WTC11 (cell line): ENCODE measurements at regions of chr11 and their contacts with region 1.

Region 1: DNA sequence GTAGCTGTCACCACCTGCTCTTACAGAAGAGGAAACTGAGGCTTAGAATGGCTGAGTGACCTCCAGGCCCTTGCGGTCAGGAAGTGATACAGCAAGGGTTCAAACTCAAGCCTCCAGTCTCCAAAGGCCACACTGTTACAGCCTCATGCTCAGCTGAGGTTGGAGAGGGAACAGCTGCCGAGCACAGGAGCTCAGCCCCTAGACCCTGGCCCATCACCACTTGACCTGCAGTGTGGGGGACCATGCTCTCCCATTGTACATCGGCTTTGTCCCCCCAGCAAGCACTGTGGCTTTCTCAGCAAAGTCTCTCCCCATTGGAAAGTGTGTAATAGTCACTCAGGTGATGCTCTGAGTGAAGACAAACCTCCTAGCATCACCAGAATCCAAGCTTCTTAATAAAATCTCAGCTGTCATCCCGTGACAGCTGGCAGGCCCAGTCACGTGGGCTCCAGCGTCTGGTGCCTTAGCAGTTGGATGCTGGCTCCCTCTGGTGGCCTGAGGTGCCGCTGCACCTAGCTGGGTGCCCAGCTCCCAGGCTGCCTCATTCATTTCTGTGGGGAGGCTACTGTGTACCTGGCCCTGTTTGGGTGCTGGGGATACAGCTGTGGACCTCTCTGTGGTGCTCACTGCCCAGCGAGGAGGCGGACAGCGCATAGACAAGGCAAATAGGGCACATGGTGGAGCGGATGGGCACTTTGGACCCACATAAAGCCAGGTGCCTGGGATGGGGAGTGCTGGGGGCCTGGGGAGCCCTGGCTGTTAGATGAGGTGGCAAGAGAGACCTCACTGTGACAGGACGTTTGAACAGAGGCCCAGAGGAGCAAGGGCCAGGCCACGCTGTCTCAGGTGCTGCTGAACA is 19.1 kb upstream of the MYRF start:
- DNase-seq: peak; percentile 85
- ATAC-seq: peak; percentile 66
- H3K4me3 Mint-ChIP-seq: no peak overlapping the region
- H3K27ac Mint-ChIP-seq: peak overlapping the region; percentile 39; the same call in 1 of the 2 replicates
- H3K4me1 Mint-ChIP-seq: peaks cover 2% of the 10 kb centered on the region; the same call in 1 of the 2 replicates
- H3K27me3 Mint-ChIP-seq: no peaks in the 10 kb centered on the region
- CTCF ChIP-seq: peak; percentile 89

Region 2: DNA sequence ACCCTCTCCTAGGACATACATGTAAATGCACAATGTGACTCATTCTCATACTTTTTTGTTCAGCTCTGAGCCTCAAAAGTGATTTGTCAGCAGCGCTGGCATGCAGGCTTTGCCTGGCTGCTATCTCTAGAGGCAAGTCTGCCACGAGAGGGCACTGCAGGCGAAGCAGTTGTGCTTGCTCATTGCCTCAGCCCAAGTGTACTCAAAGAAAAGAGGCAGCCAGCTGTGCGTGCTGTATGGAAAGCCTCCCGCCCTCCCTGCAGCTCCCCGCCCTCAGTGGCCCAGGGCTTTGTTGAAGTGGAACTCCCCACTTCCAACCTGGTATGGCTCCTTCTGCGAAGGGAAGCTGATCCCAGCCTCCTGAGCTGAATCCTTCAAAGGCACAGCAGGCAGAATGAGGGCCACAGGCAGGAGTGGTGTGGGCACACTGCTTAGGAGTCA is 287.1 kb before region 1 on chr11:
- CTCF ChIA-PET with region 1: interaction called, 10 read pairs
- POLR2A ChIA-PET with region 1: no interaction called
- DNase-seq: peak; percentile 95
- ATAC-seq: peak; percentile 93
- H3K4me3 Mint-ChIP-seq: no peak overlapping the region
- H3K27ac Mint-ChIP-seq: peak overlapping the region; percentile 82; the same call in 1 of the 2 replicates
- H3K4me1 Mint-ChIP-seq: no peaks in the 10 kb centered on the region
- H3K27me3 Mint-ChIP-seq: no peaks in the 10 kb centered on the region
- CTCF ChIP-seq: peak; percentile 47

Region 3: DNA sequence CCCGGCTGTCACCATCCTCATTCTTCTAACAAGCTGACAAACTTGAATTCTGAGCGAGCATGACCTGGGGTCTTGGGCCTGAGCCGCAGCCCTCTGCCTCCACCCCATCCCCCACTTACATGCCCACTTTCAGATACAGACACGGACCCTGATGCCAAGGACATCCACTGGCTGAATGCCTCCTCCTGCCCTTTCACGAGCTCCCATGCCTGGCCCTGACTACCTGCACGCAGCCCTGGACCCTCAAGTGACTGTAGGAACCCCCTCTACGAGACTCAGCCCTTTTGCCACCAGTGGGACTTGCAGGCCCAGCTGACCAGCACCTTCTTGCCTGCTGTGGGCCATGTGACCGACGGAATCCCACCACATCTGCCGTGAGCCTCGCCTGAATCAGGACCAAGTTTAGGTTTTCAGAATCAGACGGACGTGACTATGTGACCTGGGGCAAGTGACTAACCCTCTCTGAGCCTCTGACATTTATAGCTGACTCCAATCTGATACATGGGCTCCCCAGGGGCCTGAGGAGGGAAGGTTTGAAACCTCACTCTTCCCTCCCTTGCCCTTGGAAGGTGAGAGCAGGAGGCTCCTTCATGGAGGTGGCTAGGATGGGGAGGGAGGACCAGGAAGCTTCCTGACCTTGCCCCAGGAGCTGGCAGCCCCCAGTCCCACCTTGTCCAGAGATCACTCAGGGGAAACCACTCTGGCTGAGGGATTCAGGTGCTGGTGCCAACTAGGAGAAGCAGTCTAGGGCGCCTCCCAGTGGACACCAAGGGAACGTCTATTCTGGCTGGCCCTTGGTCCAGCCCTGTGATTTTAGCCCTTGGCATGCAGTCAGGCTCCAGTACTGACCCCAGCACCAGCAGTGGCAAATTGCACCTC is 105.5 kb before region 1 on chr11:
- CTCF ChIA-PET with region 1: interaction called, 10 read pairs
- POLR2A ChIA-PET with region 1: no interaction called
- DNase-seq: peak; percentile 87
- ATAC-seq: peak; percentile 79
- H3K4me3 Mint-ChIP-seq: no peak overlapping the region
- H3K27ac Mint-ChIP-seq: peak overlapping the region; percentile 70
- H3K4me1 Mint-ChIP-seq: peaks cover 50% of the 10 kb centered on the region
- H3K27me3 Mint-ChIP-seq: no peaks in the 10 kb centered on the region
- CTCF ChIP-seq: peak; percentile 92

Region 4: GRCh38 chr11:61671527-61671926 is 61.8 kb before region 1 on chr11:
- CTCF ChIA-PET with region 1: interaction called, 27 read pairs
- POLR2A ChIA-PET with region 1: no interaction called
- DNase-seq: peak; percentile 61
- ATAC-seq: peak; percentile 91
- H3K4me3 Mint-ChIP-seq: no peak overlapping the region
- H3K27ac Mint-ChIP-seq: no peak overlapping the region
- H3K4me1 Mint-ChIP-seq: peaks cover 14% of the 10 kb centered on the region
- H3K27me3 Mint-ChIP-seq: no peaks in the 10 kb centered on the region; the same call in 1 of the 2 replicates
- CTCF ChIP-seq: no peak

Region 5: GRCh38 chr11:61695917-61696316 is 37.4 kb before region 1 on chr11:
- CTCF ChIA-PET with region 1: interaction called, 26 read pairs
- POLR2A ChIA-PET with region 1: no interaction called
- DNase-seq: no peak
- ATAC-seq: peak; percentile 51
- H3K4me3 Mint-ChIP-seq: no peak overlapping the region
- H3K27ac Mint-ChIP-seq: no peak overlapping the region
- H3K4me1 Mint-ChIP-seq: peaks cover 49% of the 10 kb centered on the region
- H3K27me3 Mint-ChIP-seq: no peaks in the 10 kb centered on the region; the same call in 1 of the 2 replicates
- CTCF ChIP-seq: no peak

Region 6: DNA sequence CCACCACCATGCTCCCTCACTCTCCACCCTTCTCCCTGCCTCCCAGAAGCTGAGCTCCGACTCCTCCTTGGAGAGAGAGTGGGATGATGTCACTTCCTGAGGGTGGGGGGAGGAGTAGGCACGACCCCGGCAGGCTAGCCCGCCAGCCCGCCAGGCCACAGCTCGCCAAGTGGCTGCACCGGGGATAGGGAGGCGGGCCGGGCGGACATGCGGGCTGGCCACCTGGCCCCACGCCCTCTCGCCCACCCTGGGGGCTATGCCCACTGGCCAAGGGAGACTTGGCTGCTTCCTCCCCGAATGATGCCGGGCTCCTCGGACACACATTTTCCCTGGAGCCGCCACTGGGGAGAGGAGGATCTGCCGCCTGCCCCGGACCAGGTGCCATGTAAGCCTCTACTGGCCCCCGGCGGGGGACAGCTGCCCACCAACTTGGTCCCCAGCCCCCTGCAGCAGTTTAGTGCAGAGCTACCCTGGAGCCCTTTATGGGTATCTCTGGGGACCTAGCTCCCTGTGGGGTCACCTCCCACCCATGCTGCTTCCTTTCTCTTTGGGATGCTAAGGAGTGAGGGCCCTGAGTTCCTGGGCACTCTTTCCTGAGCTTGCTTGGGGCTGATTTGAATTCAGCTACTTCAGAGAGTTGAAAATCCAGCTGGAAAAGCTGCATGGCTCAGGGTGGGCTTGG is 14.6 kb before region 1 on chr11:
- CTCF ChIA-PET with region 1: interaction called, 71 read pairs
- POLR2A ChIA-PET with region 1: interaction called, 3 read pairs
- DNase-seq: peak; percentile 73
- ATAC-seq: peak; percentile 79
- H3K4me3 Mint-ChIP-seq: peak overlapping the region; percentile 61
- H3K27ac Mint-ChIP-seq: peak overlapping the region; percentile 32; the same call in 1 of the 2 replicates
- H3K4me1 Mint-ChIP-seq: peaks cover 36% of the 10 kb centered on the region
- H3K27me3 Mint-ChIP-seq: peaks cover 3% of the 10 kb centered on the region; the same call in 1 of the 2 replicates
- CTCF ChIP-seq: no peak

Region 7: GRCh38 chr11:61860054-61860903 is 126.9 kb after region 1 on chr11:
- CTCF ChIA-PET with region 1: no interaction called
- POLR2A ChIA-PET with region 1: no interaction called
- DNase-seq: no peak
- ATAC-seq: no peak
- H3K4me3 Mint-ChIP-seq: no peak overlapping the region
- H3K27ac Mint-ChIP-seq: no peak overlapping the region
- H3K4me1 Mint-ChIP-seq: no peaks in the 10 kb centered on the region
- H3K27me3 Mint-ChIP-seq: no peaks in the 10 kb centered on the region
- CTCF ChIP-seq: no peak